Activated naive CD4-positive, alpha-beta T cell treated with anti-CD3 and anti-CD28 coated beads for 36 hours (primary cell): ENCODE measurements at regions of chr19 and their contacts with region 1.

Region 1: DNA sequence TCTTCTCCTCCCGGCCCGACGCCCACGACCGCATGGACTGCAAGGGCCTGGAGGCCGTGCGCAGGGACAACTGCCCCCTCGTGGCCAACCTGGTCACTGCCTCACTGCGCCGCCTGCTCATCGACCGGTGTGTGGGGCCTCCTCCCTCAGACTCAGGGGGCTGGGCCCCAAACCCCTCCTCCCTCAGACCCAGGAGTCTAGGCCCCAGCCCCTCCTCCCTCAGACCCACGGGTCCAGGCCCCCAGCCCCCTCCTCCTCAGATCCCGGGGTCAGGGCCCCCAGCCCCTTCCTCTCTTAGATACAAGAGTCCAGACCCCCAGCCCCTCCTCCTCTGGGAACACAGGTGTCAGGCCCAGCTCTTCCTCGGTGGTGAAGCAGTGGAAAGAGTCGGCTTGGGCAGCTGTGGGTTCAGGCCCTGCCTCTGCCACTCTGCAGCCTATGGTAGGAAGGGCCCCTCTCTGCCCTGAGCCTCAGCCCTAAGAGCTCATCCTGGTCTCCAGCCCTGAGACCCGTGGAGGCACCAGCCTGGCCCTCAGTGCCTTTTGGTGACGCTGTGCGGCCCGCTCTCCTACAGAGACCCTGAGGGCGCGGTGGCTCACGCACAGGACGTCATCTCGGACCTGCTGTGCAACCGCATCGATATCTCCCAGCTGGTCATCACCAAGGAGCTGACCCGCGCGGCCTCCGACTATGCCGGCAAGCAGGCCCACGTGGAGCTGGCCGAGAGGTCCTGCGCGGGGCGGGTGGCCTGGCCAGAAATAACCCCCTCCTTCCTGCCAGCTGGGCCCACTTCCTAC is 3.7 kb upstream of the SPIB start:
- DNase-seq: peak; percentile 76
- H3K4me3 Mint-ChIP-seq: no peak overlapping the region
- H3K27ac Mint-ChIP-seq: no peak overlapping the region
- H3K4me1 Mint-ChIP-seq: peaks cover 10% of the 10 kb centered on the region
- H3K27me3 Mint-ChIP-seq: peaks cover 15% of the 10 kb centered on the region

Region 2: DNA sequence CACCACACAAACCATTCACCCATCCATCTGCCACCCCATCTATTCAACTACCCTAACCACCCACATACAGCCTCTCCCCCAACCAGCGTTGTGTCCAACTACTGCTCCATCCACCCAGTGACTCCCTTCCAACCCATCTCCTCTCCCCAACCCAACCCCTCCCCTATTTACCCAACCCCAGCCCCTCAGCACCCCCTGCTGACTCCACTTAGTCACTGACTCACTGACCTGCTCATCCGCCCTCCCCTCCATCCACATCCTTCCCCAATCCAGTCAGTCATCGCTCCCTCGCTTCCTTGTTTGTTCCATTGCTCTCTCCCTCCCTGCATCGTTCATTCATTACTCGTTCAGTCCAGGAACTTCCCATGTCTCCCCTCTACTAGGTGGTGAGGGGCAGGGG is 125.1 kb before region 1 on chr19:
- CTCF ChIA-PET with region 1: no interaction called
- intact Hi-C with region 1: no loop called
- DNase-seq: no peak
- H3K4me3 Mint-ChIP-seq: no peak overlapping the region
- H3K27ac Mint-ChIP-seq: no peak overlapping the region
- H3K4me1 Mint-ChIP-seq: no peaks in the 10 kb centered on the region
- H3K27me3 Mint-ChIP-seq: peaks cover 38% of the 10 kb centered on the region

Region 3: DNA sequence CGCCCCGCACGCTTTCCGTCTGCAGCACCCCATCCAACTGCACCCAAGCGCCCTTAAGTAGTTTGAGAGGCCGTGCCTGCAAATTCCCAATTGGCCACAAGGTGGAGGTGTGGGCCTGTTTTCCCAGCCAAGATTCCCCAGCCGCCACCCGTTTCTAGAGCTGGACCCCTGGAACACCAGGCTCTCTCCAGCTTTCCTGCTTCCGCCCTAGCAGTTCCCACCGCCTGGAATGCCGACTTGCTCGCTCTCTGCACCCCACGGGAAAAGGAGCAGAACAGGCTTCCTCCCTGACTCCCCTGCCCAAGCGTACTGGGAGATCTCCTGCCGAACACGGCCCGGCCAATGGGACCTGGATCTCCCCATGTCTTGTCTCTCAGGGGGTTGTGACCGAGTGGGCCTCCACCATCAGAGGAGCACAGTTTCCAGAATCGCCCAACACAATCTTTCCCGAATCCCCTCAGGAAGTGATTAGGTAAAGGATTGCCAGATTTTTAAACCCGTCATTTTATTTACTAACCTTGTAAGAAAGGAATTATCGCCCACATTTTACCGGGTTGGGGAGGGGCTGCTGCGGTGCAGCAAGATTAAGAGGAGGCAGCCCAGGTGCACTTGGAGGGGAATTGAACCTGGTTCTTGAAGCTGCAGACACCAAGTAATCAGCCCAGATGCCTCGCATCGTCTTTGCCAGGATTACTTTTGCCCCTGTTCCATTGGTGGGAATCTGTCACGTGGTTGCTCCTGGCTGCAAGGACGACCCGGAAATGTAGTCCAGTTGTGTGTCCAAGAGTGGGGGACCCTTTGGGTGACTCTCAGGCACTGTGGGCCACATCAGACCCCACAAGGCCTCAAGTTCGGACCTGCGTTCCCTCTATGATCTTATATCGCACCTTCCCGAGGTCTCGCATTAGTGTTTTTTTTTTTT is 46.2 kb before region 1 on chr19:
- CTCF ChIA-PET with region 1: interaction called, 5 read pairs
- intact Hi-C with region 1: loop called (anchors 1 kb)
- DNase-seq: peak; percentile 89
- H3K4me3 Mint-ChIP-seq: peak overlapping the region; percentile 88
- H3K27ac Mint-ChIP-seq: peak overlapping the region; percentile 88
- H3K4me1 Mint-ChIP-seq: peaks cover 35% of the 10 kb centered on the region
- H3K27me3 Mint-ChIP-seq: no peaks in the 10 kb centered on the region

Region 4: DNA sequence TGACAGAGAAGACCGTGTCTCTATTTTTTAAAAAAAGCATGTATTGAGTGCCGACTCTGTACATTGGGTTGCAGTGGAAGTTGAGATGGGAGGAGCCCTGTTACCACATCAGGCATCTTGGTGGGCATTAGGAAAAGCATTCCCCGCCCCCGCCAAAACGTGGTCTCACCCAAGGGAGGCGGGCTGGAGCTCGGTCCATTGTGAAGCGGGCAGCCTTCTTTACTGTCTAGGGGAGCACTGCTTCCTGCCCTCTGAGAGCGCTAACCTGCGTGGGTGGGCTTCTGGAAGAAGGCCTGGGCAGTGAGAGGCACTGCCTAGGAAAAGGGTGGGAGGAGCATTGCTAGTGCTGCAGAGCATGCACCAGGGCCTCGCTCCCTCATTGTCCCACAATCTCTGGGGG is 34.9 kb before region 1 on chr19:
- CTCF ChIA-PET with region 1: no interaction called
- intact Hi-C with region 1: no loop called
- DNase-seq: no peak
- H3K4me3 Mint-ChIP-seq: no peak overlapping the region
- H3K27ac Mint-ChIP-seq: no peak overlapping the region
- H3K4me1 Mint-ChIP-seq: peaks cover 31% of the 10 kb centered on the region
- H3K27me3 Mint-ChIP-seq: no peaks in the 10 kb centered on the region

Region 5: GRCh38 chr19:50705422-50706019 is 290.5 kb after region 1 on chr19:
- CTCF ChIA-PET with region 1: no interaction called
- intact Hi-C with region 1: no loop called
- DNase-seq: peak; percentile 58
- H3K4me3 Mint-ChIP-seq: no peak overlapping the region
- H3K27ac Mint-ChIP-seq: no peak overlapping the region
- H3K4me1 Mint-ChIP-seq: no peaks in the 10 kb centered on the region
- H3K27me3 Mint-ChIP-seq: peaks cover 36% of the 10 kb centered on the region

Region 6: GRCh38 chr19:50804420-50805272 is 389.6 kb after region 1 on chr19:
- CTCF ChIA-PET with region 1: no interaction called
- intact Hi-C with region 1: no loop called
- DNase-seq: peak; percentile 99
- H3K4me3 Mint-ChIP-seq: peak overlapping the region; percentile 98
- H3K27ac Mint-ChIP-seq: peak overlapping the region; percentile 100
- H3K4me1 Mint-ChIP-seq: peaks cover 28% of the 10 kb centered on the region
- H3K27me3 Mint-ChIP-seq: no peaks in the 10 kb centered on the region